Tibial artery (tissue), 4 donors: ENCODE measurements at regions of chr2 and their contacts with region 1.

Region 1: GRCh38 chr2:28665041-28665704 is 86.5 kb upstream of the PPP1CB start:
- DNase-seq: peak; percentile 83 to 94
- H3K4me3 ChIP-seq: peak overlapping the region; percentile 3 to 33
- H3K27ac ChIP-seq: peak overlapping the region; percentile 80 to 84
- H3K4me1 ChIP-seq: peaks cover 0 to 70% (median 54%) of the 10 kb centered on the region in 4 donors
- H3K27me3 ChIP-seq: no peaks in the 10 kb centered on the region
- CTCF ChIP-seq: no peak

Region 2: DNA sequence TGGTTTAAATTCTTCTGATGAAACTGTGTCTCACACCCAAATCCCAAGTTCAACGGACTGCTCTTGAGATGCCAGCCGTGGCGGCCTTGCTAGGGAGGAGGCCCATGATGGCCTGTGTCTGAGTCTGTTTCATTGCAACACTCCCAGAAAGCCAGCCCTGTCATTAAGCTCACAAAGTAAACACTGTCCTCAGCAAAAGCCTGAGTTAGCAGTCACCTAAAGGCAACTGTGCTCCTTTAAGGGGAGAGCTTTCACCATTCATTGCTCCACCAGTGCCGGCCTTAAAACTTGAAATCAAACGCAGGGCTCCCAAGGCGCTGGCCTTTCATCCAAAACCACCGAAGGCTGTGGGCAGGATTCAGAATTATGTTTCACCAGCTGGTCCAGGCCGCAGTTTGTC is 43.9 kb after region 1 on chr2:
- intact Hi-C with region 1: loop called (anchors 5 kb)
- DNase-seq: peak in 1 of 2 donors; percentile 34
- H3K4me3 ChIP-seq: no peak overlapping the region
- H3K27ac ChIP-seq: no peak overlapping the region
- H3K4me1 ChIP-seq: peaks cover 0 to 6% (median 2%) of the 10 kb centered on the region in 4 donors
- H3K27me3 ChIP-seq: no peaks in the 10 kb centered on the region
- CTCF ChIP-seq: no peak